Caco-2 (cell line): ENCODE measurements at regions of chr11 and their contacts with region 1.

Region 1: GRCh38 chr11:81497202-81497804 is 1236.4 kb downstream of the FAM181B start:
- DNase-seq: peak in 1 of 2 experiments; percentile 69
- H3K4me3 ChIP-seq: no peak overlapping the region
- H3K4me3 Mint-ChIP-seq: no peak overlapping the region
- H3K27ac Mint-ChIP-seq: no peak overlapping the region
- H3K4me1 ChIP-seq: peaks cover 7% of the 10 kb centered on the region; the same call in 1 of the 2 replicates
- H3K4me1 Mint-ChIP-seq: peaks cover 6% of the 10 kb centered on the region
- H3K27me3 ChIP-seq: no peaks in the 10 kb centered on the region
- H3K27me3 Mint-ChIP-seq: no peaks in the 10 kb centered on the region
- CTCF ChIP-seq: peak; percentile 64 to 80

Region 2: DNA sequence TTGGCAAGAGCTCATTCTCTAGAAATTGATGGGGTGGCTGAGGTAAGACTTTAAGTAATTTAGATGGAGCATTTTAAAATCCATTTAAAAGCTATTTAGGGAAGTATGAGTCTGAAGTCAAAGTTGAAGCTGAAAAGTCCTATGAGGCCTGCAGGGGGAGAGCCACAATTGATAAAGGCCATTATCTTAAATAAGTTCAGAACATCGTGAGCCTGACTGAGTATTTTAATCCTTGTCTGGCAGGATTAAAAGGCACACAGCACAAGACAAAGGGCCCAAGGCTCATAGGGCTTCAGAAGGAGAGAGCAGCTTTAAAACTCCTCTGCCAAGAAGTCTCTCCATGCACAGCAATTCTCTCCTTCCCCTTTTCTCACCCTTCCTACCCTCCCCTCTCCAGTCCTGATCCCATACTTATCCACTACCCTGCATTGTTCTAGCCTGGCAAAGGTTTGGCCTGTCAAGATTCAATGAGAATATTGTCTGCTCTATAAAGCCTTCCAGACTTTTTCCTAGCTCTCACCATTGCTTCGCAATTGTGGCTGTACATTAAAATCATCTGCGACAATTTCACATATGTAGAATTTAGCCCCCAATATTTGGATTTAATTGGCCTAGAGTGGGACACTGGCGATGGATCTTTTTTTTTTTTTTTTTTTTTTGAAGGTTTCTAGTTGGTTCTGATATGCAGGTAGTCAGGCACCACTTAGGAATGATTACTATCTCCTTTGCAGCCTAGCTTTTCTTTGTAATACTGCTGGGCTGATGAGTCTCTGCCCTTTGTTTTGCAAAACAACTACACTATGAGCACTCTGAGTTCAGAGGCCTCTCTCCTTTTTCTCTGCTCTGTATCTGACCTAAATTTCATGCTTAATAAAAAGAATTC is 76.4 kb before region 1 on chr11:
- CTCF ChIA-PET with region 1: no interaction called
- POLR2A ChIA-PET with region 1: no interaction called
- intact Hi-C with region 1: loop called (anchors 1 kb)
- DNase-seq: no peak
- H3K4me3 ChIP-seq: no peak overlapping the region
- H3K4me3 Mint-ChIP-seq: no peak overlapping the region
- H3K27ac Mint-ChIP-seq: no peak overlapping the region
- H3K4me1 ChIP-seq: no peaks in the 10 kb centered on the region
- H3K4me1 Mint-ChIP-seq: no peaks in the 10 kb centered on the region
- H3K27me3 ChIP-seq: no peaks in the 10 kb centered on the region
- H3K27me3 Mint-ChIP-seq: peaks cover 2% of the 10 kb centered on the region
- CTCF ChIP-seq: peak; percentile 25 to 33